ENCODE measurements at regions of chr16 and their contacts with region 1.

Region 1: GRCh38 chr16:58236231-58236690 is 38.4 kb upstream of the CSNK2A2 start:
- DNase-seq: peak; percentile 83 to 86
- H3K4me3 ChIP-seq: peak overlapping the region; percentile 47
- H3K4me3 Mint-ChIP-seq: peak overlapping the region; percentile 91
- H3K27ac Mint-ChIP-seq: no peak overlapping the region
- H3K4me1 ChIP-seq: 0 out of 2 replicates have a peak, but pooled peaks cover 2% of the 10 kb centered on the region
- H3K4me1 Mint-ChIP-seq: peaks cover 8% of the 10 kb centered on the region
- H3K27me3 ChIP-seq: no peaks in the 10 kb centered on the region
- H3K27me3 Mint-ChIP-seq: peaks cover 15% of the 10 kb centered on the region
- CTCF ChIP-seq: no peak

Region 2: DNA sequence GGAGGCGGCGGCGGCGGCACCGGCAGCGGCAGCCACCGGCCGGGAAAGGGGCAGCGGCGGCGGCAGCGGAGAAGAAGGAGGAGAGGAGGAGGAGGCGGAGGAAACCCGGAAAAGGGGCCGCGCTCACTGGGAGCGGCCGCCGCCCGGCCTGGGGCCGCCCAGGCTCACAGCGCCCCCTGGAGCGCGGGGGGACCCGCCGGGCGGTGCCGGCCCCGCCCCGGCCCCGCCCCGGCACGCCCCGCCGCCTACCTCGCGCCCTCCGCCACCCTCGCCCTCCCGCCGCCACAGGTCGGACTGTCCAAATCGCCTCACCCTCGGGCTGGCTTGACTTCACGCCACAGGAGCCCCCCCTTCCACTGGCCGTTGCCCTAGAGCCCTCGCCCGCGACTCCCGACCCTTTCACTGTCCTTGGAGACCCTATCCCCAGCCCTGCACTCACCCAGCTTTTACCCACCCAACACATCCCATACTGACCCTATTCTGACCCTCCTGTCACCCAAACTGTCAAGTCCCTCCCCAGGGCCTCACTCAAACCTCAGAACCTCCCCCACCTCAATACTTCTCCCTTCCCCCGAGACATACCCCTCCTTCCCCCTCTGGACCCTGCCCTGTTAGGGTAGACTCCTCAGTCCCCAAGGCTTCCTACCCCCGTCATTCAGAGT is 38.1 kb before region 1 on chr16 and contains the start of gene CSNK2A2:
- CTCF ChIA-PET with region 1: no interaction called
- POLR2A ChIA-PET with region 1: no interaction called
- intact Hi-C with region 1: loop called (anchors 5 kb)
- DNase-seq: peak; percentile 75 to 86
- H3K4me3 ChIP-seq: peak within 1 kb of the TSS; percentile 95
- H3K4me3 Mint-ChIP-seq: peak within 1 kb of the TSS; percentile 96
- H3K27ac Mint-ChIP-seq: peak within 1 kb of the TSS; percentile 84
- H3K4me1 ChIP-seq: peaks cover 11% of the 10 kb centered on the region
- H3K4me1 Mint-ChIP-seq: peaks cover 12% of the 10 kb centered on the region
- H3K27me3 ChIP-seq: no peaks in the 10 kb centered on the region
- H3K27me3 Mint-ChIP-seq: peaks cover 8% of the 10 kb centered on the region
- CTCF ChIP-seq: peak; percentile 20 to 49
- total RNA-seq, gene CSNK2A2: 165 and 181 TPM in 2 replicates

Region 3: DNA sequence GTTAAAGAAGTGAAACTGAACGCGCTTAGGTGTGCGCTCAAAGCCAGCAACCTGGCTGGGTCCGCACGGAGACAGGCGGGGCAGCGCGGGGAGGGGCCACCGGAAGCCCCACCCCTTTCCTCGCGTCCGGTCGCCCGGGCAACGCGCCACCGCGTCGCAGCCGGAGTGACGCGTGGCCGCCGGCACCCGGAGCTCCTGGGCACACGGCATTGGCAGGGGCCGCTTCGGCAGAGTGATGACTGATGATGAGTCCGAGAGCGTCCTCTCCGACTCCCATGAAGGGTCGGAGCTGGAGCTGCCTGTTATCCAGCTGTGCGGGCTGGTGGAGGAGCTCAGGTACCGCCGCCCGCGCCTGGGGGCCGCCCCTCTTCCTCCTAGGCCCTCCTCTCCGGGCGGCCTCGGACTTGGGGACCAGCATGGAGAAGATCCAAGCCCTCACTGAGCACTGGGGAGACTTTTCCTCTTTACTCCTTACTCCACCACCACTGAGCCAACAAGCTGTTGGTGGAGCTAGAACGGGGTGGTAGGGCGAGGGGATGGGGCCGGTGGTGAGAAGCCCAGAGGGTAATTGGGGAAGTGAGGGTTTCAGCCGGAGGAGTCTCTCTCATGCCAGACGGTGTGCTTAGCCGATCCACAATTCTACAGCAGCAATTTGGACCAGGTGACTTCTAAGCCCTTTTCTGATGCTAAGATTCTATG is 13.7 kb after region 1 on chr16:
- CTCF ChIA-PET with region 1: interaction called, 3 read pairs
- POLR2A ChIA-PET with region 1: no interaction called
- intact Hi-C with region 1: loop called (anchors 1 kb)
- DNase-seq: peak; percentile 70 to 91
- H3K4me3 ChIP-seq: peak overlapping the region; percentile 77
- H3K4me3 Mint-ChIP-seq: peak overlapping the region; percentile 89
- H3K27ac Mint-ChIP-seq: peak overlapping the region; percentile 74
- H3K4me1 ChIP-seq: no peaks in the 10 kb centered on the region
- H3K4me1 Mint-ChIP-seq: no peaks in the 10 kb centered on the region
- H3K27me3 ChIP-seq: no peaks in the 10 kb centered on the region
- H3K27me3 Mint-ChIP-seq: no peaks in the 10 kb centered on the region
- CTCF ChIP-seq: no peak

Measured in Caco-2 (cell line).